ENCODE measurements at regions of chr2 and their contacts with region 1.

Region 1: GRCh38 chr2:55175254-55176025 is 56.7 kb downstream of the CLHC1 start:
- DNase-seq: peak; percentile 59
- ATAC-seq: peak; percentile 95
- H3K4me3 ChIP-seq: no peak overlapping the region
- H3K27ac ChIP-seq: peak overlapping the region; percentile 66; the same call in 1 of the 2 replicates
- H3K4me1 ChIP-seq: no peaks in the 10 kb centered on the region
- H3K27me3 ChIP-seq: no peaks in the 10 kb centered on the region
- CTCF ChIP-seq: peak; percentile 70; the same call in 1 of the 2 replicates

Region 2: GRCh38 chr2:54723131-54723995 is 452.1 kb before region 1 on chr2 and contains the start of gene EML6:
- CTCF ChIA-PET with region 1: no interaction called
- POLR2A ChIA-PET with region 1: no interaction called
- in situ Hi-C with region 1: no loop called
- intact Hi-C with region 1: loop called (anchors 10 kb)
- DNase-seq: peak; percentile 95
- ATAC-seq: peak; percentile 99
- H3K4me3 ChIP-seq: peak within 1 kb of the TSS; percentile 85 to 90
- H3K27ac ChIP-seq: peak within 1 kb of the TSS; percentile 92
- H3K4me1 ChIP-seq: peaks cover 11% of the 10 kb centered on the region
- H3K27me3 ChIP-seq: peaks cover 4% of the 10 kb centered on the region; the same call in 1 of the 2 replicates
- CTCF ChIP-seq: peak; percentile 51
- total RNA-seq, gene EML6: 6.3 TPM

Region 3: DNA sequence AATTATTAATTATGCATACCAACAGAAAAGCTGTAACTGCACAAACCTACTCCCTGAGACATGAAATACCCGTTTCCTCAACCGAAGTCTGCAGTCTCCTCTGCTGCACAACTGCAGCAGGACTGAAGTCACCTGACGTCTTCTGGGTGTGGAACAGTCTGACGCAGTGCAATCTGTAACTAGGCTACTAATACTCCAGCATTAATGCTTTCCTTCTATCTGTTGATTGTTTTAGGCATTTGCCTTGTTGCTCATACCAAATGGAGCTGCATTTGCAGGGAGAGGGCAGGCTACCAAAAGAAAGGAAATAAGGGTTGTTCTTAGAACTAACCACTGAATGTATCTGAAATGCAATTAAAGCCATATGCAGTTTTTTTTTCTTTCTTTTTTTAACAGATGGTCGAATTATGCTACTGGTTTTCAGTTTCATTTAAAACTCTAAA is 165.3 kb before region 1 on chr2:
- CTCF ChIA-PET with region 1: interaction called, 4 read pairs
- POLR2A ChIA-PET with region 1: interaction called, 13 read pairs
- in situ Hi-C with region 1: no loop called
- intact Hi-C with region 1: no loop called
- DNase-seq: no peak
- ATAC-seq: peak; percentile 87
- H3K4me3 ChIP-seq: peak overlapping the region; percentile 38 to 51
- H3K27ac ChIP-seq: peak overlapping the region; percentile 91
- H3K4me1 ChIP-seq: peaks cover 99% of the 10 kb centered on the region
- H3K27me3 ChIP-seq: no peaks in the 10 kb centered on the region
- CTCF ChIP-seq: no peak

Measured in Panc1 (cell line).